ENCODE measurements at regions of chr18 and their contacts with region 1.

Region 1: DNA sequence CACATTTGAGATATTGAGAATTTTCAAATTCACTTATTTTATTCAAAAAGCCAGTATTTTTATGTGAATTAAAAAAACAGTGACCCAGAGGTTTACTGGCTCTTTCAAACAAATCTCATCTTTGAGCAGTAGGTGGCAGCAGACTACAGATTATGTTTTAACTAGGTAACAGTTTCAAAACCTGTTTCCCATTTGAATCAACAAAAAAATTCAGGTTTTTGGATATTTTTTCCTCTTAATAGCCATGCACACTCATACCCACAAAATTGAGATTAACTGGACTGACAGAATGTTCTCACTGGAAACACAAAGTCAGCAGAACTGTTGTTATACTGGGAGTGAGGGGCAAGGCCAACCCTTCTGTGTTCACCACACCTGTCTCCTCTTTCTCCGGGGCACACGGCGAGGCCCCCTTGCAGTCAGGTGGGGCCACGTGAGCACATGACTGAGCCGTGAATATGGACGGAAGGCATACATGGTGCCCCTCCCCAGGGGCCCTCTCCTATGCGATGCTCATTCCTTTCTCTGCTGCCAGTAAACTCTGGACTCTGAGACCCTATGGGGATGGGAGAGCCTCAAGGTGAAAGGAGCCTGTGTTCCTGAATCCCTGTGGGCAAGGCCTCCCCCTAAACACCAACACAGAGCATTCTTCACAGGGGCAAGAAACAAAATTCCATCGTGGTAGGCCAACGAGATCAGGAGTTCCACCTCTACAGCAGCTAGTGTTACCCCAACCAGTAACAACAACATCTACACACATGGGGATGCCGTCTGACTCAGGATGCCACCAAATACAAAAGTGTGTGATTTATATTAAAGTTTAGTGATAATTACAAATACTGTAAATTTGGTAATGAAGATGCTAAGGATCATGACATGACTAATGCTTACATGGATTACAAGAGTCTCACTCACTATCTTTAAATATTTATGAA is 80.4 kb downstream of the LPIN2 start:
- DNase-seq: peak; percentile 75
- H3K4me3 ChIP-seq: no peak overlapping the region
- H3K27ac ChIP-seq: no peak overlapping the region
- H3K4me1 ChIP-seq: peaks cover 0 to 21% (median 16%) of the 10 kb centered on the region in 4 donors
- H3K27me3 ChIP-seq: no peaks in the 10 kb centered on the region
- CTCF ChIP-seq: peak; percentile 66 to 78 (median 76)
- EP300 ChIP-seq: no peak
- POLR2A ChIP-seq: no peak

Region 2: GRCh38 chr18:2985628-2986027 is 53.1 kb after region 1 on chr18:
- intact Hi-C with region 1: loop called (anchors 10 kb)
- DNase-seq: no peak
- H3K4me3 ChIP-seq: no peak overlapping the region
- H3K27ac ChIP-seq: no peak overlapping the region
- H3K4me1 ChIP-seq: peaks cover 29 to 48% (median 36%) of the 10 kb centered on the region in 4 donors
- H3K27me3 ChIP-seq: no peaks in the 10 kb centered on the region
- CTCF ChIP-seq: peak; percentile 34 to 59 (median 58)
- EP300 ChIP-seq: no peak
- POLR2A ChIP-seq: no peak

Region 3: GRCh38 chr18:3062798-3063680 is 130.5 kb after region 1 on chr18:
- intact Hi-C with region 1: loop called (anchors 1 kb)
- DNase-seq: peak; percentile 90
- H3K4me3 ChIP-seq: peak overlapping the region; percentile 9 to 35 (median 26)
- H3K27ac ChIP-seq: peak overlapping the region in 2 of 4 donors; percentile 13 to 20
- H3K4me1 ChIP-seq: peaks cover 10 to 36% (median 25%) of the 10 kb centered on the region in 4 donors
- H3K27me3 ChIP-seq: no peaks in the 10 kb centered on the region
- CTCF ChIP-seq: peak; percentile 72 to 77 (median 73)
- EP300 ChIP-seq: no peak
- POLR2A ChIP-seq: no peak

Region 4: GRCh38 chr18:3129053-3129864 is 196.7 kb after region 1 on chr18:
- intact Hi-C with region 1: loop called (anchors 5 kb)
- DNase-seq: peak; percentile 92
- H3K4me3 ChIP-seq: no peak overlapping the region
- H3K27ac ChIP-seq: no peak overlapping the region
- H3K4me1 ChIP-seq: peaks cover 0 to 17% (median 9%) of the 10 kb centered on the region in 4 donors
- H3K27me3 ChIP-seq: no peaks in the 10 kb centered on the region
- CTCF ChIP-seq: peak; percentile 71 to 87 (median 74)
- EP300 ChIP-seq: no peak
- POLR2A ChIP-seq: no peak

Region 5: GRCh38 chr18:3151399-3152264 is 219.1 kb after region 1 on chr18:
- intact Hi-C with region 1: loop called (anchors 5 kb)
- DNase-seq: no peak
- H3K4me3 ChIP-seq: no peak overlapping the region
- H3K27ac ChIP-seq: peak overlapping the region in 1 of 4 donors; percentile 52
- H3K4me1 ChIP-seq: peaks cover 15 to 33% (median 21%) of the 10 kb centered on the region in 4 donors
- H3K27me3 ChIP-seq: no peaks in the 10 kb centered on the region
- CTCF ChIP-seq: peak; percentile 62 to 85 (median 80)
- EP300 ChIP-seq: no peak
- POLR2A ChIP-seq: no peak

Region 6: GRCh38 chr18:3245853-3246634 is 313.5 kb after region 1 on chr18:
- intact Hi-C with region 1: loop called (anchors 5 kb)
- DNase-seq: peak; percentile 97
- H3K4me3 ChIP-seq: peak overlapping the region; percentile 87 to 98 (median 94)
- H3K27ac ChIP-seq: peak overlapping the region; percentile 99 to 100 (median 99)
- H3K4me1 ChIP-seq: peaks cover 18 to 55% (median 49%) of the 10 kb centered on the region in 4 donors
- H3K27me3 ChIP-seq: no peaks in the 10 kb centered on the region
- CTCF ChIP-seq: peak; percentile 95 to 99 (median 95)
- EP300 ChIP-seq: no peak
- POLR2A ChIP-seq: no peak

Measured in esophagus muscularis mucosa (tissue), 4 donors.